Endothelial cell of umbilical vein (primary cell): ENCODE measurements at regions of chr15 and their contacts with region 1.

Region 1: DNA sequence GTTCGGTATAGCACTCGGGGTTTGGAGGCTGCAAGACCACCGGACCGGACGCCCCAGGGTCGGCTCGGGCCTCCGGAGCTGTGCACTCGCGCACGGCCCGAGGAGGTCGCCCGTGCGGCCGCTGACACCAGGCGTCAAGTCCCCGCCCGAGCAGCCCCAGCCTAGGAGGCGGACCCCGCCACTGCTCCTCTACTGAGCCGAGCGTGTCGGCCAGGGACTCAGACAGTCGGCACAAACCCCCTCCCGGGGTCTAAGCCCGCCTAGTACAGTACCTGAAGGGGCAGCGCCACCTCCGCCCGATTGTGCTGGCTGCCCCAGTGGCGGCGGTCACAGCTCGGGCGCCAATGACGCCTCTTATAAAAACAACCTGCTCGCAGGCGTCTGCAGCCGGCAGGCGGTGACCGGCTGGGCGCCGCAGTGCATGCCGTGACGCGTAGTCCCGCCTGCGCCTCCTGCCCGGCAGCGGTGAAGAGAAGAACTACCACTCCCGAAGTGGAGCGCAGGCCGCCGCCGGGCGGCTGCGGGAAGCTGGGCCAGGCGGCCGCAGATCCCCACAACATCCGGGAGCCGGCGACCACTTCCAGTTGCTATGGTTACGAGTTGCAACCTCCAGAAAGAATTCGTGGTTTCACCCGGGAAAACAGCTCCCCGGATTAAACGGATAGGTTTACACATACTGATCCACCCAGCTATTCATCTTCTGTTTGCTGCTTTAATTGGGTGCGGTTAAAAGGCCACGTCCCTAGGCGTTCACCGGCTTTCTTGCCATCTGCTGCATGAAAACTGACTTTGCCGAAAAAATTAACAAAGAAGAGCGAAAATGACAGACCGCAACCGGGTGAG is at the starts of genes CCPG1 and PIERCE2:
- DNase-seq: peak; percentile 96
- H3K4me3 ChIP-seq: peak within 1 kb of the TSS; percentile 81 to 97 (median 96)
- H3K27ac ChIP-seq: peak within 1 kb of the TSS; percentile 93
- H3K4me1 ChIP-seq: peaks cover 21% of the 10 kb centered on the region
- H3K27me3 ChIP-seq: no peaks in the 10 kb centered on the region
- CTCF ChIP-seq: peak; percentile 56 to 79
- POLR2A ChIP-seq: peak; percentile 67
- total RNA-seq, gene CCPG1: 58.5 and 59.5 TPM in 2 replicates
- total RNA-seq, gene PIERCE2: 1.9 and 2.3 TPM in 2 replicates

Region 2: GRCh38 chr15:55196458-55197361 is 211.5 kb before region 1 on chr15 and contains the start of gene RSL24D1:
- CTCF ChIA-PET with region 1: interaction called, 8 read pairs
- POLR2A ChIA-PET with region 1: no interaction called
- dilution Hi-C with region 1: no loop called
- intact Hi-C with region 1: loop called (anchors 1 kb)
- DNase-seq: peak; percentile 99
- H3K4me3 ChIP-seq: peak within 1 kb of the TSS; percentile 85 to 97 (median 97)
- H3K27ac ChIP-seq: peak within 1 kb of the TSS; percentile 89
- H3K4me1 ChIP-seq: peaks cover 16% of the 10 kb centered on the region
- H3K27me3 ChIP-seq: no peaks in the 10 kb centered on the region
- CTCF ChIP-seq: peak; percentile 9 to 38
- POLR2A ChIP-seq: peak; percentile 94
- total RNA-seq, gene RSL24D1: 58.2 and 60.0 TPM in 2 replicates

Region 3: GRCh38 chr15:55221090-55222011 is 186.8 kb before region 1 on chr15:
- CTCF ChIA-PET with region 1: interaction called, 5 read pairs
- POLR2A ChIA-PET with region 1: no interaction called
- dilution Hi-C with region 1: no loop called
- intact Hi-C with region 1: loop called (anchors 1 kb)
- DNase-seq: peak; percentile 21
- H3K4me3 ChIP-seq: no peak overlapping the region
- H3K27ac ChIP-seq: peak overlapping the region; percentile 12
- H3K4me1 ChIP-seq: peaks cover 5% of the 10 kb centered on the region
- H3K27me3 ChIP-seq: no peaks in the 10 kb centered on the region
- CTCF ChIP-seq: no peak
- POLR2A ChIP-seq: no peak

Region 4: DNA sequence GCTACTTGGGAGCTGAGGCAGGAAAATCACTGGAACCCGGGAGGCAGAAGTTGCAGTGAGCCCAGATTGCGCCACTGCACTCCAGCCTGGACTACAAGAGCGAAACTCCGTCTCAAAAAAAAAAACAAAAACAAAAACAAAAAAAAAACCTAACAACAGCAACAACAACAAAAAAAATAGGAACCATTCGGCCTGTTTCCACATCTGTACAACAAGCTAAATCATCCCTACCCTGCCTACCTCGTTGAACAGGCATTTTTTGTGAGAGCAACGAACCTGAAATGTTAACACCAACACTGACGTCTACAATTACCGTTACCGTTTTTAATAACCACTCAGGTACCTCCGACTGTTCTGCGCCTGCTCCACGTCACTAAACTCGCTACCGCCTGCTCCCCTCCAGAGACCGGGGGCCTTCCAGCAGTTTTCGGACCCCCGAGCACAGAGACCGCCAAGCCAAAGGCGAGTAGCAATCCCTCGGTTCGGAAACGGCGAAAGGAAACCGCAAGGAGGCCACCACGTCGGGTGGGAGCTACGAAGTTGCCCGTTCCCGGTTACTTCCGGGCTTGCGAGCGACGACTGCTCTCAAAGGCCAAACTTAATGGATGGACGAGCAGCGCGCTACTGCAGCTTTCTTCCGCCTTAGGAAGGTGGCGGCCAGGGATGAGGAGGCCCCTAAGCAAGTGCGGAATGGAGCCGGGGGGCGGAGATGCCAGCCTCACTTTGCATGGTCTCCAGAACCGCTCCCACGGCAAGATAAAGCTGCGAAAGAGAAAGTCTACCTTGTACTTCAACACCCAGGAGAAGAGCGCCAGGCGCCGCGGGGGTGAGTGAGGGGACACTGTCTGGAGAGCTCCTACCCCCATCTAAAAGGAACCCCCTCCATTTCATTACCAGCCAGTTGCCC is 89.3 kb before region 1 on chr15 and contains the starts of genes PIGB and PIGBOS1:
- CTCF ChIA-PET with region 1: interaction called, 22 read pairs
- POLR2A ChIA-PET with region 1: interaction called, 4 read pairs
- dilution Hi-C with region 1: no loop called
- intact Hi-C with region 1: loop called (anchors 1 kb)
- DNase-seq: peak; percentile 92
- H3K4me3 ChIP-seq: peak within 1 kb of the TSS; percentile 45 to 83 (median 77)
- H3K27ac ChIP-seq: peak within 1 kb of the TSS; percentile 74
- H3K4me1 ChIP-seq: peaks cover 9% of the 10 kb centered on the region
- H3K27me3 ChIP-seq: no peaks in the 10 kb centered on the region
- CTCF ChIP-seq: no peak
- POLR2A ChIP-seq: peak; percentile 77
- total RNA-seq, gene PIGB: 11.8 and 14.1 TPM in 2 replicates
- total RNA-seq, gene PIGBOS1: 12.8 and 15.1 TPM in 2 replicates

Region 5: DNA sequence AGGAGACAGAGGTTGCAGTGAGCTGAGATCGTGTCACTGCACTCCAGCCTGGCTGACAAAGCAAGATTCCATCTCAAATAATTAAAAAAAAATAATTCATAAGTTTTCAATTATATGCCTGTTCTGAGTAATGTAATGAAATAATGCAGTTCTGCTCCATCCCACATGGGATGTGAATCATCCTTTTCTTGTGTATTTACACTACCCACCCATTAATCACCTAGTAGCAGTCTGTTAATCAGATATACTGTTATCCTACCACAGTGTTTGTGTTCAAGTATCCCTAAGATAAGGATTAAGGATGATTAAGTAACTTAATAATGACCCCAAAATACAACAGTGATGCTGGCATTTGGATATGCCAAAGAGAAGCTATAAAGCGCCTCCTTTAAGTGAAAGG is 50.4 kb before region 1 on chr15:
- CTCF ChIA-PET with region 1: interaction called, 10 read pairs
- POLR2A ChIA-PET with region 1: no interaction called
- dilution Hi-C with region 1: no loop called
- intact Hi-C with region 1: loop called (anchors 1 kb)
- DNase-seq: peak; percentile 64
- H3K4me3 ChIP-seq: no peak overlapping the region
- H3K27ac ChIP-seq: no peak overlapping the region
- H3K4me1 ChIP-seq: peaks cover 13% of the 10 kb centered on the region
- H3K27me3 ChIP-seq: no peaks in the 10 kb centered on the region
- CTCF ChIP-seq: no peak
- POLR2A ChIP-seq: no peak

Region 6: DNA sequence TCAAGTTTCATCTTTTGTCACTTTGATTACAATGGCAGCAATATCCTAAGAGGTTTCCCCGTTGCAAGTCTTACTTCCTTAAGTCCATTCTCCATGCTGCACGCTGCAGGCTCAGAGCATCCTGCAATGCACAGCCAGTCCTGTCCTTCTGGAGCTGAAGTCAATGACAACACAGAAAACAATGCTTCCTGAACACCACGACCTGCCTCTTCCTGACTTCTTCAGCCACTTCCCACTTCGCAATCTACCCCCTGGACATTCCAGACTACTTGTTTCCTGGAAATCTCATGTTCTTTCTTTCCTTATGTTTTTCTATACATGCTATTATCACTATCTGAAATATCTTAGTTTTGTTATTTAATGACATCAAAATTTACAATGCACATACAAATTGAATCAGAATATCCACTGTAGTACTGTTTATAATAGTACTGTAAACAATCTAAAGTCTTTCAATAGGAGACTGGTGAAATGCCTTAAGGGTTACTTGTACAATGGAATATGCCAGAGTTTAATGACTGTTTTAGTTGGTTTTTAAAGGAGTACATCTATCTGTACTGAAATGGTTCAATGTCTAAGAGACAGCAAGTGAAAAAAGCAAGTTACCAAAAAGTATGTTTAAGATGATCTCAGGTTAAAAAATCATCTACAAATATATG is 448.5 kb after region 1 on chr15:
- CTCF ChIA-PET with region 1: no interaction called
- POLR2A ChIA-PET with region 1: no interaction called
- dilution Hi-C with region 1: no loop called
- intact Hi-C with region 1: no loop called
- DNase-seq: peak; percentile 79
- H3K4me3 ChIP-seq: no peak overlapping the region
- H3K27ac ChIP-seq: no peak overlapping the region
- H3K4me1 ChIP-seq: peaks cover 13% of the 10 kb centered on the region
- H3K27me3 ChIP-seq: no peaks in the 10 kb centered on the region
- CTCF ChIP-seq: no peak
- POLR2A ChIP-seq: no peak